ENCODE measurements at regions of chr7 and their contacts with region 1.

Region 1: GRCh38 chr7:151074817-151075643 is 5.6 kb downstream of the FASTK start:
- DNase-seq: no peak
- H3K4me3 ChIP-seq: no peak overlapping the region
- H3K27ac ChIP-seq: no peak overlapping the region
- H3K4me1 ChIP-seq: peaks cover 8 to 27% (median 15%) of the 10 kb centered on the region in 4 donors
- H3K27me3 ChIP-seq: no peaks in the 10 kb centered on the region
- CTCF ChIP-seq: no peak
- EP300 ChIP-seq: no peak
- POLR2A ChIP-seq: no peak

Region 2: GRCh38 chr7:149529136-149529718 is 1545.8 kb before region 1 on chr7:
- in situ Hi-C with region 1: no loop called
- intact Hi-C with region 1: loop called (anchors 5 kb)
- DNase-seq: no peak
- H3K4me3 ChIP-seq: no peak overlapping the region
- H3K27ac ChIP-seq: no peak overlapping the region
- H3K4me1 ChIP-seq: no peaks in the 10 kb centered on the region
- H3K27me3 ChIP-seq: no peaks in the 10 kb centered on the region
- CTCF ChIP-seq: no peak
- EP300 ChIP-seq: no peak
- POLR2A ChIP-seq: no peak

Region 3: GRCh38 chr7:151381348-151382078 is 306.5 kb after region 1 on chr7:
- in situ Hi-C with region 1: no loop called
- intact Hi-C with region 1: no loop called
- DNase-seq: peak; percentile 20
- H3K4me3 ChIP-seq: peak overlapping the region in 2 of 4 donors; percentile 31 to 40
- H3K27ac ChIP-seq: no peak overlapping the region
- H3K4me1 ChIP-seq: peaks cover 6 to 16% (median 14%) of the 10 kb centered on the region in 4 donors
- H3K27me3 ChIP-seq: peaks cover 28% of the 10 kb centered on the region
- CTCF ChIP-seq: no peak
- EP300 ChIP-seq: no peak
- POLR2A ChIP-seq: no peak

Region 4: GRCh38 chr7:151968357-151968756 is 893.3 kb after region 1 on chr7:
- in situ Hi-C with region 1: no loop called
- intact Hi-C with region 1: no loop called
- DNase-seq: no peak
- H3K4me3 ChIP-seq: no peak overlapping the region
- H3K27ac ChIP-seq: no peak overlapping the region
- H3K4me1 ChIP-seq: no peaks in the 10 kb centered on the region
- H3K27me3 ChIP-seq: no peaks in the 10 kb centered on the region
- CTCF ChIP-seq: no peak
- EP300 ChIP-seq: no peak
- POLR2A ChIP-seq: no peak

Measured in transverse colon (tissue), 4 donors.